Activated T-helper 1 cell treated with anti-CD3 and anti-CD28 coated beads, Interleukin-12 subunit alpha, Interleukin-12 subunit beta, Interleukin-2, Interleukin-4 antibody, amounts not matched to agents 30 ng/mL and 10 ng/mL and 1 ng/mL, durations not matched to agents 14 hours and 24 hours and 36 hours (primary cell): ENCODE measurements at regions of chr1 and their contacts with region 1.

Region 1: GRCh38 chr1:91732291-91733107 is 153.5 kb downstream of the TGFBR3 start:
- DNase-seq: no peak
- H3K4me3 Mint-ChIP-seq: no peak overlapping the region
- H3K27ac Mint-ChIP-seq: peak overlapping the region; percentile 37
- H3K4me1 Mint-ChIP-seq: peaks cover 51% of the 10 kb centered on the region
- H3K27me3 Mint-ChIP-seq: peaks cover 8% of the 10 kb centered on the region

Region 2: GRCh38 chr1:91697416-91697815 is 35.1 kb before region 1 on chr1:
- intact Hi-C with region 1: loop called (anchors 1 kb)
- DNase-seq: peak; percentile 69
- H3K4me3 Mint-ChIP-seq: peak overlapping the region; percentile 72
- H3K27ac Mint-ChIP-seq: peak overlapping the region; percentile 86
- H3K4me1 Mint-ChIP-seq: peaks cover 41% of the 10 kb centered on the region
- H3K27me3 Mint-ChIP-seq: peaks cover 1% of the 10 kb centered on the region